A549 (cell line): ENCODE measurements at regions of chr19 and their contacts with region 1.

Region 1: GRCh38 chr19:48492925-48493717 is 18.5 kb downstream of the LMTK3 start:
- DNase-seq: peak; percentile 95 to 100
- ATAC-seq: peak; percentile 67 to 85
- H3K4me3 ChIP-seq: peak overlapping the region; percentile 65
- H3K27ac ChIP-seq: peak overlapping the region; percentile 86 to 94
- H3K4me1 ChIP-seq: peaks cover 50% of the 10 kb centered on the region
- CTCF ChIP-seq: no peak
- EP300 ChIP-seq: no peak
- POLR2A ChIP-seq: peak; percentile 89
- RAD21 ChIP-seq: no peak

Region 2: DNA sequence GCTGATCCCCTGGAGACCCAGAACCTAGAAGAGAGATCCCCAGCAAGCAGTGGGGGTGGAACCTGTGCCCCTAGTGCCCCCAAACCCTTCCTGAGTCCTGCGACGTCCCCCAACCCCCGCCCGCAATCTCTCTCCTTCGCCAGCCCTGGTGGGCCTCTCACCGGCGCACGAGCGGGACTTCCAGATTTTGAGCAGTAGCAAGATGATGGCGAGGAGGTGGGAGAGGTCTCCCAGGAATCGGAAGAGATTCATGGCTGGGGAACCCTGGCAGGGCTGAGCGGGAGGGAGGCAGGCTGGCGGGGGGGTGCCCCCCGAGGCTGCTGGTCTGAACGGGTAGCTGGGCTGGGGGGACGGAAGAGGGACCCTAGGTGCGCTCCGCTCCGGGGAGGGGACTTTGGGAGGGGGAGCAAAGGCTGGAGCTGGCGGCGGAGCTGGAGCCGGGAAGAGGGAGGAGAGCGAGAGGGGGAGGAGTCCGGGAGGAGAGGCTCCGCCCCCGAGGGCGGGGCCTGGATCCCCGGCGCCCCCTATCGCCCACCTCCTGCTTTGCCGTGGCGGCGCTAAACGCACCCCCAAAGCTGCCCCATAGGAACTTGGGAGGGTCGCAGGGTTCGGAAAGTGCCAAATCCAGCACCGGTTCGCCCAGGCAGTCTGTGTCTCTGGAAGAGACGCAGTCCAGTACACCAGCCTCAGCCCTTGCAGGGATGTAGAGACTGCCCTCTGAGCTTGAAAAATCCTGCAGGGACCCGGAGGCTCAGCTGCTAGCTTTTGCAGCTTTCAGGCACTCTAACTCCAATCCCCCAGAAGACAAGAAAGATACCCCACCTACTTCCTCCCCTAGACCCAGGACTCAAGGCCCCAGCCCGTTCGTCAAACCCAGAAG is 101.8 kb before region 1 on chr19 and contains the start of gene KDELR1:
- CTCF ChIA-PET with region 1: interaction called, 15 read pairs
- POLR2A ChIA-PET with region 1: interaction called, 9 read pairs
- DNase-seq: peak; percentile 77 to 78
- ATAC-seq: peak; percentile 54 to 72
- H3K4me3 ChIP-seq: peak within 1 kb of the TSS; percentile 97
- H3K27ac ChIP-seq: peak within 1 kb of the TSS; percentile 95 to 97
- H3K4me1 ChIP-seq: peaks cover 54% of the 10 kb centered on the region
- CTCF ChIP-seq: peak; percentile 90
- EP300 ChIP-seq: no peak
- POLR2A ChIP-seq: peak; percentile 72
- RAD21 ChIP-seq: peak; percentile 31 to 47; a peak in 4 of 5 replicates
- polyA plus RNA-seq, gene KDELR1: 200 and 270 TPM in 2 replicates

Region 3: DNA sequence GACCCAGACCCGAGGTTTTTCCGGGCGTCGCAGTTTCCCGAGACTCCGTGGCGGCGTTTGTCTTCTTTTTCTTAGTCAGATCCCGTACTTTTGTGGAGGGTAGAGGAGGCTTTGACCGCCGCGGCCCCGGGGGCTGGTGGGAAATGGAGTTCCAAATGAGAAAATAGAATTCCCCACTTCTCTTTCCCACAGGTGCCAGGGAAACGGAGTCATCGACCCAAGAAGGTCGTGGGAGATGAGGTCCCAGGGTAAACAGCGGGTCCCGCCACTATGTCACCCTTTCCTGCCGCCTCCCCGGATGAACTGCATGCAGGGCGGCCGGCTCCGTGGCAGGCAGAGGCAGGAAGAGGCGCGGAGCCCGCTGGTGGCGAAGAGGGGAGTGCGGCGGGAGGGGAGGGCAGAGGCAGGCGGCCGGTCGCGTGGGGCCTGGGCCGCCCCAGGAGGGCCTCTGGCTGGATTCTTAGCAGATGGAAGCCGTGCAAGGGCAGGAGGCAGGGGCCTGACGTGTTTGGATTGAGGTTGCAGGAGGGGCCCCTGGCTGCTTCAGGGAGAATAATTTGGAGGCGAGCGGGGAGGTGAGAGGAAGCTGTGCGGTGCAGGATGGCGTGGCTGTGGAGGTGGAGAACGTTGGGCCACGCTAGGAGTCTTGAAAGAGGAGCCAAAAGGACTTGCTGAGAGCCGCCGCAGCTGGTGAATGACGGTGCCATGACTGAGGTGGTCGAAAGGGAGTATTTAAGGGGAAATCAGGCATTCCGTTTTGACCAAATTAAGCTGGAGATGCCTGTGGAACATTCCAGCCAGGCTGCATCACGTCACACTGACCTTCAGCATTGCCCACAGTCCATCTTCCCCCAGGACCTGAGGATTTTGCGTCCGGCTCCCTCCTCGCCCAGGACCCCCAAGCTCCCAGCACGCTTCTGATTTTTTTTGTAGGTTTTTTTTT is 12.3 kb before region 1 on chr19:
- CTCF ChIA-PET with region 1: interaction called, 58 read pairs
- POLR2A ChIA-PET with region 1: interaction called, 8 read pairs
- DNase-seq: no peak
- ATAC-seq: no peak
- H3K4me3 ChIP-seq: no peak overlapping the region
- H3K27ac ChIP-seq: no peak overlapping the region
- H3K4me1 ChIP-seq: peaks cover 20% of the 10 kb centered on the region
- CTCF ChIP-seq: no peak
- EP300 ChIP-seq: no peak
- POLR2A ChIP-seq: no peak
- RAD21 ChIP-seq: no peak

Region 4: DNA sequence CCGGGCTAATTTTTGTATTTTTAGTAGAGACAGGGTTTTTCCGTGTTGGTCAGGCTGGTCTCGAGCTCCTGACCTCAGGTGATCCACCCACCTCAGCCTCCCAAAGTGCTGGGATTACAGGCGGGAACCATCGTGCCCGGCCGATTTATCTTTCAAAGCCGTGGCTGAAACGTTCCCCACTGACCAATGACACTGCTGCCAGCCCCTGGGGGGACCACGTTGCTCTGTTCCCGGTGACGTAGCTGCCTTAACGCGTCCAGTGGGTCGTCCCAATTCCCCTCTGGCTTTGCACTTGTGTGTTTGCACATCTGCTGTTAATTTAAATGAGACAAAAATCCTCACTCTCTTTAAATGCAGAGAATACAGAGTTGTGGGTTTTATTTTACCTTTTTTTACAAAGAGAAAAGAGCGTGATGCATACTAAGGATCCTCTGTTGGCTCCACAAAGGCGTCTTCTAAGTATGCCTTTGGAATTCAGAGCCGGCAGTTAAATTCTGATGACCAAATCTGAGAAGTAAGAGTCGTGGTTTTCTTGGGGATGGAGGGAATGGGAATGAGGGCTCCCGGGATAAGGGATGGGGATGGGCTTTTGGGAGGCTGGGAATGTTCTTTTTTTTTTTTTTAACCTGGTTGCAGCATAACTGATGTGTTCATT is 37.1 kb after region 1 on chr19:
- CTCF ChIA-PET with region 1: interaction called, 10 read pairs
- POLR2A ChIA-PET with region 1: no interaction called
- DNase-seq: no peak
- ATAC-seq: 0 out of 6 replicates have a peak, but pooled peaks of 1 of the 2 experiments have one; percentile 13
- H3K4me3 ChIP-seq: no peak overlapping the region
- H3K27ac ChIP-seq: no peak overlapping the region
- H3K4me1 ChIP-seq: no peaks in the 10 kb centered on the region
- CTCF ChIP-seq: no peak
- EP300 ChIP-seq: no peak
- POLR2A ChIP-seq: no peak
- RAD21 ChIP-seq: no peak

Region 5: GRCh38 chr19:48568345-48568886 is 75.3 kb after region 1 on chr19:
- CTCF ChIA-PET with region 1: interaction called, 100 read pairs
- POLR2A ChIA-PET with region 1: interaction called, 15 read pairs
- DNase-seq: peak; percentile 91 to 98
- ATAC-seq: peak; percentile 95 to 97
- H3K4me3 ChIP-seq: peak overlapping the region; percentile 23; the same call in 1 of the 3 replicates
- H3K27ac ChIP-seq: peak overlapping the region; percentile 97 to 100
- H3K4me1 ChIP-seq: peaks cover 85% of the 10 kb centered on the region
- CTCF ChIP-seq: no peak
- EP300 ChIP-seq: peak; percentile 59 to 87; a peak in 3 of 5 replicates
- POLR2A ChIP-seq: peak; percentile 47
- RAD21 ChIP-seq: peak; percentile 23 to 55

Region 6: GRCh38 chr19:48618916-48619691 is 126.0 kb after region 1 on chr19 and contains the starts of genes RPL18 and SPHK2:
- CTCF ChIA-PET with region 1: interaction called, 16 read pairs
- POLR2A ChIA-PET with region 1: interaction called, 15 read pairs
- DNase-seq: peak; percentile 99 to 100
- ATAC-seq: peak; percentile 79 to 89
- H3K4me3 ChIP-seq: peak within 1 kb of the TSS; percentile 68
- H3K27ac ChIP-seq: peak within 1 kb of the TSS; percentile 89 to 90
- H3K4me1 ChIP-seq: peaks cover 50% of the 10 kb centered on the region
- CTCF ChIP-seq: no peak
- EP300 ChIP-seq: peak in 1 of 2 experiments; percentile 34; a peak in 2 of 5 replicates
- POLR2A ChIP-seq: peak; percentile 98
- RAD21 ChIP-seq: no peak; a peak in 1 of 5 replicates
- polyA plus RNA-seq, gene RPL18: 1,390 and 1,780 TPM in 2 replicates
- polyA plus RNA-seq, gene SPHK2: 5.5 and 6.1 TPM in 2 replicates